GM12878 (cell line): ENCODE measurements at regions of chr7 and their contacts with region 1.

Region 1: DNA sequence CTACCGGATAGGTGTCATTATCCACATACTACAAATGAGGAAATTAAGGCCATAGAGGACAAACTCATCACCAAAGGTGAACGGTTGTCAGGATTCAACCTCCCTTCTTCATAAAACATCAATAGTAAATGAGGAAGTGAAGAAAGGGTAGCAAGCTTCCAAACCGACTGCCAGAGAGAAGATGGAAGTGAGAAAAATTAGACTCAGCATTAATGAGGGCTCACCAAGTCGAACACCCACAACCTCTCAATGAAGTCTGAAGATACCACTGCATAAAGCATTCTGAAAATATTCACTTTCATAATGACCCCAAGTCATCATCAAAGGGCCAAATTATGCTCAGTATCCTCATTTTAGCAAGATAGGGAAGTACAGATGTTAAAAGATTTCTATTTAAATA is 29.6 kb downstream of the ABCB4 start:
- DNase-seq: peak; percentile 74
- ATAC-seq: peak; percentile 98
- H3K4me3 ChIP-seq: no peak overlapping the region
- H3K27ac ChIP-seq: no peak overlapping the region
- H3K4me1 ChIP-seq: peaks cover 4% of the 10 kb centered on the region; the same call in 1 of the 2 replicates
- H3K27me3 ChIP-seq: no peaks in the 10 kb centered on the region
- CTCF ChIP-seq: no peak
- EP300 ChIP-seq: peak; percentile 75 to 87; a peak in 3 of 4 replicates
- POLR2A ChIP-seq: no peak
- RAD21 ChIP-seq: no peak

Region 2: GRCh38 chr7:87075671-87076404 is 370.1 kb before region 1 on chr7:
- CTCF ChIA-PET with region 1: no interaction called
- POLR2A ChIA-PET with region 1: no interaction called
- RAD21 ChIA-PET with region 1: no interaction called
- SMC1A ChIA-PET with region 1: no interaction called
- in situ Hi-C with region 1: no loop called
- intact Hi-C with region 1: no loop called
- DNase-seq: no peak
- ATAC-seq: peak; percentile 41; the same call in 1 of the 3 replicates
- H3K4me3 ChIP-seq: no peak overlapping the region
- H3K27ac ChIP-seq: no peak overlapping the region; the same call in 1 of the 2 replicates
- H3K4me1 ChIP-seq: no peaks in the 10 kb centered on the region
- H3K27me3 ChIP-seq: no peaks in the 10 kb centered on the region
- CTCF ChIP-seq: no peak
- EP300 ChIP-seq: no peak
- POLR2A ChIP-seq: no peak
- RAD21 ChIP-seq: no peak

Region 3: GRCh38 chr7:87435546-87435945 is 10.4 kb before region 1 on chr7:
- CTCF ChIA-PET with region 1: no interaction called
- POLR2A ChIA-PET with region 1: no interaction called
- RAD21 ChIA-PET with region 1: interaction called, 4 read pairs
- SMC1A ChIA-PET with region 1: interaction called, 10 read pairs
- in situ Hi-C with region 1: no loop called
- intact Hi-C with region 1: no loop called
- DNase-seq: no peak
- ATAC-seq: peak; percentile 57
- H3K4me3 ChIP-seq: no peak overlapping the region
- H3K27ac ChIP-seq: no peak overlapping the region
- H3K4me1 ChIP-seq: no peaks in the 10 kb centered on the region
- H3K27me3 ChIP-seq: no peaks in the 10 kb centered on the region
- CTCF ChIP-seq: no peak
- EP300 ChIP-seq: no peak
- POLR2A ChIP-seq: no peak
- RAD21 ChIP-seq: no peak

Region 4: GRCh38 chr7:87458148-87458547 is 12.3 kb after region 1 on chr7:
- CTCF ChIA-PET with region 1: interaction called, 3 read pairs
- POLR2A ChIA-PET with region 1: no interaction called
- RAD21 ChIA-PET with region 1: no interaction called
- SMC1A ChIA-PET with region 1: interaction called, 10 read pairs
- in situ Hi-C with region 1: no loop called
- intact Hi-C with region 1: no loop called
- DNase-seq: no peak
- ATAC-seq: no peak
- H3K4me3 ChIP-seq: no peak overlapping the region
- H3K27ac ChIP-seq: no peak overlapping the region
- H3K4me1 ChIP-seq: no peaks in the 10 kb centered on the region
- H3K27me3 ChIP-seq: no peaks in the 10 kb centered on the region
- CTCF ChIP-seq: no peak
- EP300 ChIP-seq: no peak
- POLR2A ChIP-seq: no peak
- RAD21 ChIP-seq: no peak